T-cell (primary cell): ENCODE measurements at regions of chr6 and their contacts with region 1.

Region 1: DNA sequence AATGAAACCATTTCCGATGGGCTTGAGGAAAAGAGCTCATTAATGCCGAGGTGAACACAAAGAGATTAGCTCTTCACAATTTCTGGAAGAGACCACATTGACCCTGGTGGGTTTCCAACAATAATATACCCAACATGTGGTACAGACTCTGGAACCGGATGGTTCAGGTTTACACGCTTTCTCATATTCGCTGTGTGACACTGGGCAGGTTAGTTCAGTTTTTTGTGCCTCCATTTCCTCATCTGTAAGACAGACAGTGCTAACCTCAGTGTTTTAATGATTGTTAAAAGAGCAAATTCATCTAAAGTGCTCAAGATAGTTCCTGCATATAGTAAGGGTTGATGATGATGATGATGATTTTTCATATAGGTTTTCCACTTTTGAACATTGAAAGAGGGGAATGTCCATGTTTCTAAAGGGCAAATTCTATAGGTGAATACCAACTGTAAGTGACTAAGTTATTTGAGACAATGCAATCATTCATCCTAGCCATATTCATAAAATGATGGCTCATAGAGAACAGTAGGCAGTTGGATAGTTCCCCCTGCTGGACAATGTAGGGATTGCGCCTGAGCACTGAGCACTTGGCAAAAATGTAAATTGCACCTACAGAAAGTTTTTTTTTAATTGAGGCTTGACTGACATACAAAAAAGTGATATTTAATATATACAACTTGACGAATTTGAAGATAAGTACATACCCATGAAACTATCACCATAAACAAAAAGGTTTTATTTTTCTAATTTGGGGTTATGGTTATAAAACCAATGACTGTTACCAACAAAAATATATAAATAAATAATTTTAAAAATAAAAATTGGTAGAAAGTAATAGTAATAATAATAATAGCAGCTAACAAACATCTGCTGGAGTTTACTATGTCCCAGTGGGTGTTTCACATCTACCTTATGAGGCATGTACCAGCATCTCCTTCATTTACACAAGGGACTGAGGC is 2.1 kb upstream of the PERP start:
- DNase-seq: peak; percentile 33 to 88 (median 67)
- ATAC-seq: peak; percentile 33 to 59 (median 51)
- H3K4me3 ChIP-seq: no peak overlapping the region
- H3K4me3 Mint-ChIP-seq: no peak overlapping the region
- H3K27ac ChIP-seq: no peak overlapping the region
- H3K27ac Mint-ChIP-seq: peak overlapping the region in 1 of 2 donors; percentile 37
- H3K4me1 ChIP-seq: peaks cover 10 to 18% of the 10 kb centered on the region in 2 experiments
- H3K4me1 Mint-ChIP-seq: peaks cover 23 to 34% (median 26%) of the 10 kb centered on the region in 3 donors
- H3K27me3 ChIP-seq: peaks cover 13 to 25% of the 10 kb centered on the region in 2 experiments
- H3K27me3 Mint-ChIP-seq: peaks cover 29% of the 10 kb centered on the region in 2 donors

Region 2: GRCh38 chr6:138001750-138002349 is 107.5 kb before region 1 on chr6:
- CTCF ChIA-PET with region 1: interaction called, 12 to 15 read pairs
- POLR2A ChIA-PET with region 1: no interaction called
- DNase-seq: peak in 34 of 35 experiments; percentile 5 to 79 (median 52)
- ATAC-seq: peak; percentile 32 to 69 (median 52)
- H3K4me3 ChIP-seq: no peak overlapping the region
- H3K4me3 Mint-ChIP-seq: no peak overlapping the region
- H3K27ac ChIP-seq: no peak overlapping the region
- H3K27ac Mint-ChIP-seq: no peak overlapping the region
- H3K4me1 ChIP-seq: peaks cover 0 to 2% of the 10 kb centered on the region in 2 experiments
- H3K4me1 Mint-ChIP-seq: peaks cover 2 to 6% (median 5%) of the 10 kb centered on the region in 3 donors
- H3K27me3 ChIP-seq: no peaks in the 10 kb centered on the region
- H3K27me3 Mint-ChIP-seq: peaks cover 0 to 7% of the 10 kb centered on the region in 2 donors

Region 3: DNA sequence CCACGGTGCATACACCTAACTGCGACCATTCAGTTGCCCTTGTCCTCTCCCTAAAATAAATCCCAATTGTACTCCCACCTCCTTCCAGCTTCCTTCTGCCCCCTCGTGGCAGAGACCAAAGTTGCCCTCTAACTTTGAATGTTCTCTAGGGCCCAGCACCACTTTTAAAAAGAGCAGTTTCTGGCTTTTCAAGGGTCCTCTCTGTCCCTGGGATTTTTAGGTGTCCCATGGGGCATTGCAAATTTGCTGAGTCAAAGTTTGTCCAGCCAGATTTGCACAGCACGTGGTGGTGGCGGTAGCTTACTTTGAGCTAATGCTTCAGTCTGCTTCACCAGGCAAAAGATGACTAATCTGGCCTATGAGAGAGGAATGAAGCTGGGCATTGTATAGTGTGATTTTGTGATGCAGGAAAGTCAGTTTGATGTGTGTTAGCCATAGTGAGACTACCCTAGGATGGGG is 102.3 kb before region 1 on chr6:
- CTCF ChIA-PET with region 1: interaction called, 12 to 15 read pairs
- POLR2A ChIA-PET with region 1: interaction called, 4 to 8 read pairs
- DNase-seq: peak in 6 of 35 experiments; percentile 2 to 32 (median 6)
- ATAC-seq: no peak
- H3K4me3 ChIP-seq: no peak overlapping the region
- H3K4me3 Mint-ChIP-seq: no peak overlapping the region
- H3K27ac ChIP-seq: no peak overlapping the region
- H3K27ac Mint-ChIP-seq: no peak overlapping the region
- H3K4me1 ChIP-seq: peaks cover 0 to 2% of the 10 kb centered on the region in 2 experiments
- H3K4me1 Mint-ChIP-seq: peaks cover 0 to 2% (median under 1%) of the 10 kb centered on the region in 3 donors
- H3K27me3 ChIP-seq: peaks cover 0 to 5% of the 10 kb centered on the region in 2 experiments
- H3K27me3 Mint-ChIP-seq: peaks cover 0 to 3% of the 10 kb centered on the region in 2 donors

Region 4: GRCh38 chr6:138086573-138087196 is 22.6 kb before region 1 on chr6:
- CTCF ChIA-PET with region 1: no interaction called
- POLR2A ChIA-PET with region 1: no interaction called
- DNase-seq: no peak
- ATAC-seq: no peak
- H3K4me3 ChIP-seq: no peak overlapping the region
- H3K4me3 Mint-ChIP-seq: no peak overlapping the region
- H3K27ac ChIP-seq: no peak overlapping the region
- H3K27ac Mint-ChIP-seq: no peak overlapping the region
- H3K4me1 ChIP-seq: no peaks in the 10 kb centered on the region
- H3K4me1 Mint-ChIP-seq: no peaks in the 10 kb centered on the region
- H3K27me3 ChIP-seq: peaks cover 0 to 2% of the 10 kb centered on the region in 2 experiments
- H3K27me3 Mint-ChIP-seq: peaks cover 2 to 34% of the 10 kb centered on the region in 2 donors